Activated CD8-positive, alpha-beta memory T cell treated with anti-CD3 and anti-CD28 coated beads, Interleukin-2, amount 10 ng/mL, durations not matched to agents 7 days and 5 days (primary cell): ENCODE measurements at regions of chr20 and their contacts with region 1.

Region 1: GRCh38 chr20:38805502-38805957 is at the start of gene PPP1R16B:
- DNase-seq: peak; percentile 93
- ATAC-seq: peak; percentile 86
- H3K4me3 Mint-ChIP-seq: peak within 1 kb of the TSS; percentile 88
- H3K27ac Mint-ChIP-seq: peak within 1 kb of the TSS; percentile 98
- H3K4me1 Mint-ChIP-seq: peaks cover 57% of the 10 kb centered on the region
- H3K27me3 Mint-ChIP-seq: no peaks in the 10 kb centered on the region
- total RNA-seq, gene PPP1R16B: 86.5 to 128 TPM

Region 2: DNA sequence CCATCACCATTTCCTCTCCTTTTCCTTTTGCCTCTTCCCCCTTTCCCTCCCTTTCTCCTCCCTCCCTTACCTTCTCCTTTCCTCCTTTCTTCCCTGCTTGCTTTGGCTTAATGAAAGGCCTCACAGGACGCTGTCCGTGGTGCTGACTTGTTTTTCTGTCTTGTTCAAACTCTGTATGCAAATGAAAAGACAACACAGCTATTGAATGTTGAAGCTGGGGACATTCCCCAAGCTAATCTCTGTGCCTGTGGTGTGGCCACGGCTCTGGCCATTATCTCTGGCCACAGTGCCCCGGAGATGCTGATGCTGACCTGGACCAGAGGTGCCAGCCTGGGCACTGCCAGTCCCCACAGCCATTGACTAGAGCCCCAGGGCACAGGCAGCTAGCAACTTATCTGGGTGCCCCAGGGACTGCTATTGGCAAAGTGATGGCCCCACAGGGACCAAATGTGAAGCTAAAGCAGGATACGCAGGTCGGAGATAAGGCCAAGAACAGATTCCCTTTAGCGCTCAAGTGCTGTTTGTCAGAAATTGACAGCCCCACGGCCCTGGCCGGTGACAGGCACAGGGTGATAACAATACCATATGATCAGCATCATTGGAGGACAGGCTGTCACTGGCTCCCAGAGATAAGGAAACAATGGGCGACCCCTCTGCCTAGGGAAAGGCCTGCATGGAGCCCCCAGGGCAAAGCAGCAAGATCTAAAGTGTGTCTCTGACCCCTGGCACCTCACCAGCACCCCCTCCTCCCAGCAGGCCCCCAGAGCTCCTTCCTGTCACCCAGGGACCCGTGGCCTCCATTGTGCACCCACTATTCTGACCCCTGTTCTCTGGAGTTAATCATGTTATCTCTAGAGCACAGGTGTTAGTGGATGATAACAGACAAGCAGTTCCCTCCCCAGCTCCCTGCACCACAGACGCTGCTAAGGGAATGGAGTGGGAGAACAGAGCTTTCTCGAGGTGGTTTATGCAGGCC is 112.8 kb before region 1 on chr20:
- CTCF ChIA-PET with region 1: no interaction called
- DNase-seq: peak; percentile 69
- ATAC-seq: no peak
- H3K4me3 Mint-ChIP-seq: no peak overlapping the region
- H3K27ac Mint-ChIP-seq: no peak overlapping the region
- H3K4me1 Mint-ChIP-seq: no peaks in the 10 kb centered on the region
- H3K27me3 Mint-ChIP-seq: peaks cover 17% of the 10 kb centered on the region

Region 3: GRCh38 chr20:38833857-38834164 is 28.3 kb after region 1 on chr20:
- CTCF ChIA-PET with region 1: interaction called, 29 read pairs
- DNase-seq: no peak
- ATAC-seq: peak; percentile 34
- H3K4me3 Mint-ChIP-seq: peak overlapping the region; percentile 9
- H3K27ac Mint-ChIP-seq: peak overlapping the region; percentile 72
- H3K4me1 Mint-ChIP-seq: peaks cover 61% of the 10 kb centered on the region
- H3K27me3 Mint-ChIP-seq: no peaks in the 10 kb centered on the region

Region 4: GRCh38 chr20:38842558-38842981 is 37.0 kb after region 1 on chr20:
- CTCF ChIA-PET with region 1: interaction called, 29 read pairs
- DNase-seq: peak; percentile 62
- ATAC-seq: no peak
- H3K4me3 Mint-ChIP-seq: peak overlapping the region; percentile 32
- H3K27ac Mint-ChIP-seq: peak overlapping the region; percentile 77
- H3K4me1 Mint-ChIP-seq: peaks cover 85% of the 10 kb centered on the region
- H3K27me3 Mint-ChIP-seq: no peaks in the 10 kb centered on the region